ENCODE measurements at regions of chr5 and their contacts with region 1.

Region 1: DNA sequence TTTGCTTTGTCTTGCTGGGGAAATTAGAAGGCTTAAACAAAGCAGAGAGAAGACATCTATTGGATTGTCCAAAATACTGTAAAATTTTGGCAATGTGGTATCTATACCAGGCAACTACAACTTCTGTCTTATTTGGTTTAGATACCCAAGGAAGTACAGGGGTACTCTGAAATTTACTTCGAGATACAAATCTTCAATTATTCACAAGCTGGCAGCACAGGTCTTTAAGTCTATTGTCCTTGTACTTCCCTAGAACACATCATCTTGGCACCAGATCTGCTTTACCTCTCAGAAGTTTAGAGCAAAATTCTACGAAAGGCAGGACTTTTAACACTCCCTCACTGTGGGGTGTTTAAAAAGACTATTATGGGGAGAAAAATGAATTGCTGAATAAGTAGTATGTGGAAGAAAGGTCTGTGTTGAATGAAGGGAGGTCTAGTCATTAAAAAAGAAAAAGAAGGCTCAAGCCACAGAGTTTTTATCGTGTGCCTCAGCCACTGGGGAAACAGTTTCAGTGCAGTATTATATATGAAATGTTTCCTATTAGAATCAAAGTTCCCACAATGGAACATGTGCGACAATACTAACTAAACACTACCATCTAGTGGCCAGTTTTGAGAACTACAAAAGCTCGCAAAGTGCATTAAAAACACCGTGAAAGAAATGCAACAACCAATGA is 93.7 kb downstream of the PDE4D start:
- DNase-seq: peak; percentile 82
- H3K4me3 ChIP-seq: no peak overlapping the region
- H3K27ac ChIP-seq: peak overlapping the region; percentile 62
- H3K4me1 ChIP-seq: peaks cover 22% of the 10 kb centered on the region
- H3K27me3 ChIP-seq: no peaks in the 10 kb centered on the region
- CTCF ChIP-seq: peak; percentile 33 to 59
- POLR2A ChIP-seq: no peak

Region 2: GRCh38 chr5:59039296-59040023 is 760.3 kb before region 1 on chr5:
- CTCF ChIA-PET with region 1: no interaction called
- POLR2A ChIA-PET with region 1: no interaction called
- dilution Hi-C with region 1: no loop called
- intact Hi-C with region 1: loop called (anchors 10 kb)
- DNase-seq: peak; percentile 77
- H3K4me3 ChIP-seq: peak overlapping the region; percentile 57 to 81 (median 60)
- H3K27ac ChIP-seq: peak overlapping the region; percentile 14
- H3K4me1 ChIP-seq: peaks cover 40% of the 10 kb centered on the region
- H3K27me3 ChIP-seq: no peaks in the 10 kb centered on the region
- CTCF ChIP-seq: no peak
- POLR2A ChIP-seq: no peak

Region 3: GRCh38 chr5:59390074-59390659 is 409.6 kb before region 1 on chr5:
- CTCF ChIA-PET with region 1: interaction called, 53 read pairs
- POLR2A ChIA-PET with region 1: no interaction called
- dilution Hi-C with region 1: no loop called
- intact Hi-C with region 1: loop called (anchors 1 kb)
- DNase-seq: peak; percentile 40
- H3K4me3 ChIP-seq: no peak overlapping the region
- H3K27ac ChIP-seq: no peak overlapping the region
- H3K4me1 ChIP-seq: no peaks in the 10 kb centered on the region
- H3K27me3 ChIP-seq: no peaks in the 10 kb centered on the region
- CTCF ChIP-seq: peak; percentile 26 to 33
- POLR2A ChIP-seq: no peak

Region 4: GRCh38 chr5:59562756-59563389 is 236.9 kb before region 1 on chr5:
- CTCF ChIA-PET with region 1: interaction called, 4 read pairs
- POLR2A ChIA-PET with region 1: no interaction called
- dilution Hi-C with region 1: no loop called
- intact Hi-C with region 1: loop called (anchors 2 kb)
- DNase-seq: peak; percentile 88
- H3K4me3 ChIP-seq: peak overlapping the region in 1 of 3 experiments; percentile 35
- H3K27ac ChIP-seq: peak overlapping the region; percentile 77
- H3K4me1 ChIP-seq: peaks cover 49% of the 10 kb centered on the region
- H3K27me3 ChIP-seq: no peaks in the 10 kb centered on the region
- CTCF ChIP-seq: no peak
- POLR2A ChIP-seq: no peak

Region 5: DNA sequence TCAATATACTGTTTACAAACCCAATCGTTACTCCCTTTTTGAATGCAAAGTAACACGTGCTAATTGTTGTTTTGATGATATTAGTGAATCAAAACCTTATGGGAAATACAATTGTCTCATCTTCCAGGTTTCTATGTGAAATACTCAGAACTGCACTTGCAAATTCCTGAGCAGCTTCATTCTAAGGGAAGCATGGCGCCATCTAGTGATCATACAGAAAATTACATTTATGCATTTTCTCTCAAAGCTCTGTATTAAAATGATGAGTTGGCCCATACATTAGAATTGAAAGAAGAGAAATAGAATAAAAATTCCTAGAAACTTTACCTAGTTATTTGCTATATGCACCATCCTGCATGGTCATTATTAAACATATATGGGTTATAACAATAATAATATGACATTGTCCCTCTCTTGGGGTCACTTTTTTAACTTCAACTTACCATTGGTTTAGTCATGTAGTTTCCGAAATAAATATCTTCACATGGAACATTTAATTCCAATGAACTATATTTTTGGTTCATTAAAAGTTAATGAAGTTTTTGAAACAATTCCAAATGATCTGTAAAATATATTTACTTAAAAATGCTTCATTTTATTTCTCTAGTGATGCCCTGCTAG is 126.3 kb before region 1 on chr5:
- CTCF ChIA-PET with region 1: interaction called, 38 read pairs
- POLR2A ChIA-PET with region 1: no interaction called
- dilution Hi-C with region 1: no loop called
- intact Hi-C with region 1: loop called (anchors 1 kb)
- DNase-seq: peak; percentile 66
- H3K4me3 ChIP-seq: no peak overlapping the region
- H3K27ac ChIP-seq: no peak overlapping the region
- H3K4me1 ChIP-seq: no peaks in the 10 kb centered on the region
- H3K27me3 ChIP-seq: no peaks in the 10 kb centered on the region
- CTCF ChIP-seq: peak; percentile 38 to 46
- POLR2A ChIP-seq: no peak

Region 6: DNA sequence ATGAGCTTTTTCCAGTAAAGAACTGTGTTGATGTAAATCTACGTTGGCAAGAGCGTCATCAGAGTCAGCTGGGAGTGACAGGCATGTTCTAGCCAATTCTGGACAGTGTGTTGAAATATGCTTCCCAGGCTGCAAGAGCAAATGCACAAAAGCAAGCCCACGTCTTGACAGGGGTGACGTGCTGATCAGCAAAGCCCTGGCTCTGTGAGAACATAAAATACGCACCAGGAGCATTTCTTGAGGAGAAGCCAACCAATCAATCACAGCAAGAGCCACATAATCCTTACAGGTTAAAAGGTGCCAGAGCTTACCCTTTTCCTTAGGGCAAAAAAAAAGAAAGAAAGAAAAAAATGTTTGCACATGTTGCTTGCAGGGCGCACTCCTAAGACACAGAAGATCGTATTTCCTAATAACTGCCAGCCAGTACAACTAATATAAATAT is 54.4 kb before region 1 on chr5:
- CTCF ChIA-PET with region 1: interaction called, 11 read pairs
- POLR2A ChIA-PET with region 1: no interaction called
- dilution Hi-C with region 1: no loop called
- intact Hi-C with region 1: no loop called
- DNase-seq: no peak
- H3K4me3 ChIP-seq: no peak overlapping the region
- H3K27ac ChIP-seq: peak overlapping the region; percentile 75
- H3K4me1 ChIP-seq: peaks cover 28% of the 10 kb centered on the region
- H3K27me3 ChIP-seq: no peaks in the 10 kb centered on the region
- CTCF ChIP-seq: no peak
- POLR2A ChIP-seq: no peak

Region 7: DNA sequence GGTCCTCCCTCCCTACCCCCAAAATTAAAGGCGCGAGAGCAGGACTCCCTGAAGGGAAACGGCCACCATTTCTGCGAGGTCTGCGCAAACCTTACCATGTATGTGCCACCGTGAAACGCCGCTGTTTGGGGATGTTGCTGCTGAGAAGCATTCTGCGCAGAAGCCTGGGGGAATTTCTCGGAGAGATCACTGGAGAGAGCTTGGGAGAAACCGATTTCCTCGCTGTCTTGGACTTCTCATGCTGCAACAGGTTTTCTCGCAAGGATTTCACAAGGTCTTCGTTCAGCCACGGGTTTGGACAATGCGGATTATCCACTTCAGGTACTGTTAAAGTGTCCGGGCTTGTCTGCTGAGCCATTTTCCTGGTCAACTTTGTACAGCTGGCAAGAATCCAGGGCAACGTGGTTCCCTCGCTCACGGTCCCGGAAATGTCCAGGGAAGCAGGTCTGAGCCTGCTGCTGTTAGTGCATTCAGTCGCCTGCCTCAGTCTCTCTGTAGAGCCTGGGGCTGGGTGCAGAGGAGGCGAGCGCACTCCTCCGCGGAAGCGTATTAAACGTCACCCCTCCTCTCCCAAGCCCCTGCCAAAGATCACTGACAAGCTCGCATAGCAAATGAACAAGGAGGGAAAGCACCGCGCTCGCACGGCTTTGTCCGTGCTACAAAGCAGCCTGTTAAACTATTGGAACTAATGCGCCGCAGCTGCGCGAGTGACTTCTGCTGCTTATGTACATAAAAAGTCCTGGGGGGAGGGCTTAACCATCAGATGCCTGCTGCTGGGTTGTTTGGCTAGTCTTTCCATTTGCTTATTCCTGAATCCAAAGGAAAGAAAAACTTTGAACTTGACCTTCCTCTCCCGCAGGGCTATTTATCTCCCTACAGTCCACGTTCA is 31.4 kb before region 1 on chr5:
- CTCF ChIA-PET with region 1: interaction called, 3 read pairs
- POLR2A ChIA-PET with region 1: no interaction called
- dilution Hi-C with region 1: no loop called
- intact Hi-C with region 1: loop called (anchors 1 kb)
- DNase-seq: peak; percentile 94
- H3K4me3 ChIP-seq: peak overlapping the region; percentile 56 to 92 (median 59)
- H3K27ac ChIP-seq: peak overlapping the region; percentile 86
- H3K4me1 ChIP-seq: peaks cover 48% of the 10 kb centered on the region
- H3K27me3 ChIP-seq: no peaks in the 10 kb centered on the region
- CTCF ChIP-seq: no peak
- POLR2A ChIP-seq: no peak

Region 8: DNA sequence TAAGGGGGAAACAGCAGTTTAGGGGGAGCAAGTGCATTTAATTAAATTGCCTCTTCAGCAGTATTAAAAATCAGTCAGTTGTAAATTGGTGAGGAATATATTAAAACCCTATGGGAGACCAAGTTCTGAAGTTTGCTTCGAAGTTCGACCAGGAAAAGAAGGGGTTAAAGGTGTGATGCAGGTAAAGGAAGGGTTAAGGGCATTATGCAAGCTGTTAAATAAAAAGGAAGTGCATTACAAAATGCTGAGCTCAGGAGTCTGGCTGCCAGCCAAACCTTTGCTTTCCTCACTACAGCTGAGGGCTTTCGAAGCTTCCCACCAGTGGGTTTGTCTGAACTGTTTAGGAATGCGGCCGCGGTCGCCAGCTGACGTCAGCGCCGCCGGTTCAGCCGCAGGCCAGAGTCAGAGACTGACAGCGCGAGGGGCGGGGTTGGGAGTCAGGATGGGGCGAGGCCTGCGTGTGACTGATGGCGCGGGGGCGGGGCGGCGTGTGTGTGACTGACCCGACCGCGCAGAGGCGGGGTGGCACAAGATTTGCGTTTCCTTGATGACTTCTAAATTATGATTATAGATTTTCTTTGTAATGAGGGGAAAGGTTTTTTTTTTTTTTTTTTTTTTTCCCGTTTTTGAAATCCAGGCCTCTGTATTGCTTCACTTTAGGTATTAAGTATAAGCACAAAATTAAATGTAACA is 1608.8 kb after region 1 on chr5:
- CTCF ChIA-PET with region 1: no interaction called
- POLR2A ChIA-PET with region 1: no interaction called
- dilution Hi-C with region 1: no loop called
- intact Hi-C with region 1: no loop called
- DNase-seq: peak; percentile 99
- H3K4me3 ChIP-seq: peak overlapping the region in 2 of 3 experiments; percentile 15 to 63
- H3K27ac ChIP-seq: peak overlapping the region; percentile 97
- H3K4me1 ChIP-seq: peaks cover 21% of the 10 kb centered on the region
- H3K27me3 ChIP-seq: no peaks in the 10 kb centered on the region
- CTCF ChIP-seq: no peak
- POLR2A ChIP-seq: peak; percentile 52

Measured in endothelial cell of umbilical vein (primary cell).